ENCODE measurements at regions of chr5 and their contacts with region 1.

Region 1: DNA sequence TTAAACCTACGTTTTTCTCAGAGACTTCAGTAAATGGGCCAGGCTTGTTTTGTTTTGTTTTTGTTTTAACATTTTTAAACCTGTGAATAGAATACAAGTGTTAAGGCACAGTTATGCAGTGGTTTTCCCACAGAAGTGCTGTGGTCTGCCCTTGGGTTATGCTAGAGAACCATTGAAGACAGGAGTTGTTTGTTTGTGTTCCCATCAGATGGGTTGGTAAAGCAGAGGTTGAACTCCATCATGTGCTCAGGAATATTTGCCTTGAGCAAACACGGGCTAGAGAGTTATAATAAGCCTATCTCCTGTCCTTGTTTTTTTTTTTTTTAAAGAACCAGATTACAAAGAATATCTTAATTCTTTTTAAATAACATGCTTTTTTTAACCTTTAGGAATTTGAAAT is 28.5 kb downstream of the RHOBTB3 start:
- DNase-seq: no peak
- ATAC-seq: no peak
- H3K4me3 ChIP-seq: no peak overlapping the region
- H3K27ac ChIP-seq: peak overlapping the region in 5 of 12 donors; percentile 5 to 85 (median 14)
- H3K4me1 ChIP-seq: peaks cover 0 to 43% (median 27%) of the 10 kb centered on the region in 12 donors
- H3K27me3 ChIP-seq: no peaks in the 10 kb centered on the region
- CTCF ChIP-seq: no peak
- POLR2A ChIP-seq: no peak

Region 2: GRCh38 chr5:95422838-95423237 is 336.8 kb before region 1 on chr5:
- intact Hi-C with region 1: no loop called
- DNase-seq: no peak
- ATAC-seq: no peak
- H3K4me3 ChIP-seq: no peak overlapping the region
- H3K27ac ChIP-seq: no peak overlapping the region
- H3K4me1 ChIP-seq: no peaks in the 10 kb centered on the region
- H3K27me3 ChIP-seq: no peaks in the 10 kb centered on the region
- CTCF ChIP-seq: no peak
- POLR2A ChIP-seq: no peak

Region 3: GRCh38 chr5:95655575-95655974 is 104.1 kb before region 1 on chr5:
- intact Hi-C with region 1: loop called in 2 of 10 experiments (anchors 5 to 10 kb)
- DNase-seq: no peak
- ATAC-seq: no peak
- H3K4me3 ChIP-seq: no peak overlapping the region
- H3K27ac ChIP-seq: no peak overlapping the region
- H3K4me1 ChIP-seq: peaks cover 0 to 6% (median 0%) of the 10 kb centered on the region in 12 donors
- H3K27me3 ChIP-seq: no peaks in the 10 kb centered on the region
- CTCF ChIP-seq: no peak
- POLR2A ChIP-seq: no peak

Region 4: DNA sequence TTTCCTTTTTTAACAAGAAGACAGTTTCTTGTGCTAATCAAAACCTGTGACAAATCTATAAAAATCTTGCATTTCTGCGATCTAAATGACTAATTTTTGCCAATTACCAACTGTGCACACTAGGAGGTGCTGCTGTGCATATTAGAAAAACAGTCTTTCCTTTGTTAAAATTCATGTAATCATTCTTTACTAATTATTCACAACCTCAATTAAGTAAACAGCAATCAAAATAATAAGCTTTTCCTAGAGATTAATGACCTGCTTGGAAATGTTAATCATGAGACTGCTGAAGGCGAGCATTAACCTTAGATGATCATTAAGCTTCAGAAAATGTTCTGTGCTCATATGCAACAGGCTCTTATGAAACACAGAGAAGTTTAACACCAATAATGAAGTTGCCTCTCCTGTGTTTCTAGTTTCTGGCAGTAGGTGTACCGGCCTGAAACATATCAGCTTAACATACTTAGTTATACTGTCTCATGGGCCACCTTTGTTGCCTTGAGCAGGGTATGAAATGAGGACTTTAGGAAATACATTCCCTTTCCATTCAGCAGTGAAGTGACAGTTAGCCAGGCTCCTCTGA is 95.3 kb before region 1 on chr5:
- intact Hi-C with region 1: loop called in 2 of 10 experiments (anchors 5 to 10 kb)
- DNase-seq: no peak
- ATAC-seq: peak in 2 of 4 donors; percentile 39 to 45
- H3K4me3 ChIP-seq: no peak overlapping the region
- H3K27ac ChIP-seq: peak overlapping the region in 3 of 12 donors; percentile 26 to 37 (median 34)
- H3K4me1 ChIP-seq: peaks cover 0 to 25% (median 9%) of the 10 kb centered on the region in 12 donors
- H3K27me3 ChIP-seq: no peaks in the 10 kb centered on the region
- CTCF ChIP-seq: peak; percentile 65 to 89 (median 83)
- POLR2A ChIP-seq: no peak

Region 5: GRCh38 chr5:95746722-95747679 is 12.6 kb before region 1 on chr5:
- intact Hi-C with region 1: loop called in 1 of 10 experiments (anchors 1 kb)
- DNase-seq: no peak
- ATAC-seq: no peak
- H3K4me3 ChIP-seq: no peak overlapping the region
- H3K27ac ChIP-seq: no peak overlapping the region
- H3K4me1 ChIP-seq: peaks cover 0 to 28% (median 3%) of the 10 kb centered on the region in 12 donors
- H3K27me3 ChIP-seq: no peaks in the 10 kb centered on the region
- CTCF ChIP-seq: no peak
- POLR2A ChIP-seq: no peak

Region 6: DNA sequence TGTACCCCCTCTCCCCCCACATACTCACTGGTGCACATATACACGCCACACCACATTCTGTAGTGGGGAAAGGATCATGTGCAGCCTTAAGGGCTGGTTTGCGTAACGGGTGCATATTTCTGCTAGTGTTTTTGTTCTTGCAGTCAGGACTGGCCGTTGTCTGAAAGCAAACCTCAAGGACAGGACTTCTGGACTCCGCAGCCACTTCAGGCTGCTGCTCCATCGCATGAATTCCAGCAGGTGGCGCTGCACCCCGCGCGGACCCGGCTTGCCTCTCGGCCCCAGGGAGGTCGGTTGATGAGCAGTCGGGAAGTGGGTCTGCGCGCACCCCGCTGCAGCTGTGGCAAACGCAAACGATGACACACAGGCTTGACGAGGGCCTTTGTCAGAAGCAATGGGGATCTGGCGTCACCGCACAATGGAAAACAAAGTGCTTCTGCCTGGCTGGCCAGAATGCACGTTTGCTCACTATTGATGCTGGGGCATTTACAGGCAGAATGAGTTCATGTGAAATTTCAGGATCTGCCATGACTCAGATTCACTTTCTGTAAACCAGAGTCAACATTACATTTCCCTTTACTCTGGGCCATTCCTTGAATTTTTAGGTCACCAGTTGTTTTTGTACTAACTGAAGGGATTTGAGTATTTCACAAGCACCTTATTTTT is 99.2 kb after region 1 on chr5:
- intact Hi-C with region 1: no loop called
- DNase-seq: peak; percentile 85 to 96 (median 91)
- ATAC-seq: peak; percentile 62 to 80 (median 73)
- H3K4me3 ChIP-seq: peak overlapping the region in 9 of 12 donors; percentile 18 to 46 (median 30)
- H3K27ac ChIP-seq: peak overlapping the region; percentile 82 to 97 (median 90)
- H3K4me1 ChIP-seq: peaks cover 0 to 72% (median 44%) of the 10 kb centered on the region in 12 donors
- H3K27me3 ChIP-seq: no peaks in the 10 kb centered on the region
- CTCF ChIP-seq: peak; percentile 97 to 99 (median 98)
- POLR2A ChIP-seq: peak in 1 of 2 donors; percentile 37